ENCODE measurements at regions of chr1 and their contacts with region 1.

Region 1: GRCh38 chr1:33094971-33095604 is 14.1 kb downstream of the AZIN2 start:
- DNase-seq: no peak
- H3K4me3 ChIP-seq: no peak overlapping the region
- H3K4me3 Mint-ChIP-seq: peak overlapping the region in 1 of 8 donors; percentile 31
- H3K27ac ChIP-seq: no peak overlapping the region
- H3K27ac Mint-ChIP-seq: peak overlapping the region in 2 of 7 donors; percentile 53 to 55
- H3K4me1 ChIP-seq: peaks cover 42% of the 10 kb centered on the region
- H3K4me1 Mint-ChIP-seq: peaks cover 26 to 58% (median 41%) of the 10 kb centered on the region in 4 donors
- H3K27me3 ChIP-seq: no peaks in the 10 kb centered on the region
- H3K27me3 Mint-ChIP-seq: no peaks in the 10 kb centered on the region

Region 2: GRCh38 chr1:33080885-33081553 is 14.1 kb before region 1 on chr1 and contains the start of gene AZIN2:
- CTCF ChIA-PET with region 1: interaction called, 95 read pairs
- POLR2A ChIA-PET with region 1: interaction called, 9 read pairs
- intact Hi-C with region 1: loop called (anchors 1 kb)
- DNase-seq: peak; percentile 94 to 98 (median 96)
- H3K4me3 ChIP-seq: peak within 1 kb of the TSS; percentile 42 to 84
- H3K4me3 Mint-ChIP-seq: peak within 1 kb of the TSS; percentile 82 to 89 (median 86)
- H3K27ac ChIP-seq: peak within 1 kb of the TSS; percentile 58
- H3K27ac Mint-ChIP-seq: peak within 1 kb of the TSS; percentile 85 to 92 (median 90)
- H3K4me1 ChIP-seq: peaks cover 28% of the 10 kb centered on the region
- H3K4me1 Mint-ChIP-seq: peaks cover 11 to 44% (median 27%) of the 10 kb centered on the region in 4 donors
- H3K27me3 ChIP-seq: no peaks in the 10 kb centered on the region
- H3K27me3 Mint-ChIP-seq: no peaks in the 10 kb centered on the region
- total RNA-seq, gene AZIN2: 6.9 to 8.0 TPM

Region 3: GRCh38 chr1:33118274-33118673 is 23.2 kb after region 1 on chr1:
- CTCF ChIA-PET with region 1: interaction called, 12 read pairs
- POLR2A ChIA-PET with region 1: no interaction called
- intact Hi-C with region 1: no loop called
- DNase-seq: no peak
- H3K4me3 ChIP-seq: no peak overlapping the region
- H3K4me3 Mint-ChIP-seq: no peak overlapping the region
- H3K27ac ChIP-seq: no peak overlapping the region
- H3K27ac Mint-ChIP-seq: peak overlapping the region in 1 of 7 donors; percentile 30
- H3K4me1 ChIP-seq: no peaks in the 10 kb centered on the region
- H3K4me1 Mint-ChIP-seq: no peaks in the 10 kb centered on the region
- H3K27me3 ChIP-seq: no peaks in the 10 kb centered on the region
- H3K27me3 Mint-ChIP-seq: no peaks in the 10 kb centered on the region